ENCODE measurements at regions of chr13 and their contacts with region 1.

Region 1: DNA sequence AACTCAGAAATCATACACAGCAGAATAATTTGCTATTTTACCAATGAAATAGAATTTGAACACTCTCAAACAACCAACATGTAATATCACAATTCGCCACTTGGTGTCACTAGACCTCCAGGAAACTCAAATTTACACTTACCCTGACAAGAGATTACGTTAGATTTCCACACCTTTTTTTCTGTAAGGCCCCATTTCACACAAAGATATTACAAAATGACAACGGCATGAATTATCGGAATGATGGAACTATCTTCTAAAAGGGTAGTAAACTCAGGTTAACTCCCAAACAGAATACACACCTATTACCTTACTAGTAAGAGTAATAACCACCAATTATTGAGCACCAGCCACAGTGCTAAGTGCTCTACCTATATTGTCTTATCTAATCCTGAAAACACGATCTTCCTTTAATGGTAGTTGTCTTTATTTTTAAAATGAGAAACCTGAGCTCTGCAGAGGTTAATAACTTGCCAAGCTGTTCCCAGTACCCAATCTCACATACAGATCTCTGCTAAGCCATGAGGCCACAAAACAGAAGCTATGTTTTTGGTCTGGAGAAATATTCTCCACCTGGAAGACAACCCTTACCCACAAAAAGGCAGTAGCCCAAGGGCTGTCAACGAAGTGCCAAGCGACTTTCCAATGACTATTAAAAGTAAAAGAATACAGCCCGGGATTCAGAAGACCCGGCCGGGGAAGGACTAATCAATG is 152.4 kb downstream of the DCLK1 start:
- DNase-seq: peak; percentile 82
- H3K4me3 Mint-ChIP-seq: no peak overlapping the region
- H3K27ac Mint-ChIP-seq: peak overlapping the region; percentile 77
- H3K4me1 Mint-ChIP-seq: peaks cover 17% of the 10 kb centered on the region
- H3K27me3 Mint-ChIP-seq: no peaks in the 10 kb centered on the region
- CTCF ChIP-seq: peak; percentile 67

Region 2: GRCh38 chr13:35881360-35881759 is 97.4 kb before region 1 on chr13:
- CTCF ChIA-PET with region 1: no interaction called
- POLR2A ChIA-PET with region 1: no interaction called
- intact Hi-C with region 1: no loop called
- DNase-seq: no peak
- H3K4me3 Mint-ChIP-seq: no peak overlapping the region
- H3K27ac Mint-ChIP-seq: no peak overlapping the region
- H3K4me1 Mint-ChIP-seq: no peaks in the 10 kb centered on the region
- H3K27me3 Mint-ChIP-seq: no peaks in the 10 kb centered on the region
- CTCF ChIP-seq: no peak

Region 3: DNA sequence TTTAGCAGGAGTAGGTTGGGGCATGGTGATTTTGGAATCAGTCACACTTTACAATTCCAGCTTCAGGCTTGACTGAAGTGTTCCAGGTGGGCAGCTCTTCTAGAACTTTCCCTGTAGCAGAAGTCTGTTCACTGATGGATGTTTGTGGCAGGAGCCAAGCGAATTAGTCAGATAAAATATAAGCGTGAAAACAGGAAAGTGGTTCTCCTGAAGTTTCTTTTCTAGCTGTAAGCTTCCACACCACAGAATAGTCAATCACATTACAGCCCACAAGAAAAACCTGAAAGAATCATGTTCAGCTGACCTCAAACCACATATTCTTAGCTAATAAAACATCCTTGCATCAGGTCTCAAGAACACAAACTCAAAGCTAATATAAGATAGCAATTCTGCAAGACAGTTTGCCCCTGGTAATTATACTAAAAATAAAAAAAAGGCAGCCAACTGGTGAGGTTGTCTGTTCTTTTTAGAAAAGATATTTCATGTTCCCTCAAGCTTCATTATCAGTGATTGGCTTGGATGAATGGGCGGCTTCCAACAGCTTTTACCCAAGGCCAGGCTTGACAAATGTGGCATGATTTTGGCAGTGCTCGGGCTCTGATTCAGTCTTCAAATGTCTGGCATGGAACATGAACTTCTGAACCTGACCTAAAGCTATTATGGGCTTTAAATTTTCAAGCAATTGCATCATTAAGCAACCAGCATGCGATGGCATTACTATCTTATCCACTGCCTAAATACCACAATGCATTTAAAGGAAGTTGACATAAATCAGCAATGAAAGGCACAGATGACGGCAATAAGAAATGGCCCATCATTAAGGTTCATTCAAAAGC is 15.6 kb after region 1 on chr13:
- CTCF ChIA-PET with region 1: interaction called, 23 read pairs
- POLR2A ChIA-PET with region 1: interaction called, 22 read pairs
- intact Hi-C with region 1: loop called (anchors 1 kb)
- DNase-seq: peak; percentile 96
- H3K4me3 Mint-ChIP-seq: no peak overlapping the region
- H3K27ac Mint-ChIP-seq: peak overlapping the region; percentile 82
- H3K4me1 Mint-ChIP-seq: peaks cover 31% of the 10 kb centered on the region
- H3K27me3 Mint-ChIP-seq: no peaks in the 10 kb centered on the region
- CTCF ChIP-seq: no peak

Region 4: GRCh38 chr13:36088014-36088413 is 109.3 kb after region 1 on chr13:
- CTCF ChIA-PET with region 1: interaction called, 3 read pairs
- POLR2A ChIA-PET with region 1: no interaction called
- intact Hi-C with region 1: loop called (anchors 2 kb)
- DNase-seq: peak; percentile 21
- H3K4me3 Mint-ChIP-seq: no peak overlapping the region
- H3K27ac Mint-ChIP-seq: no peak overlapping the region
- H3K4me1 Mint-ChIP-seq: peaks cover 6% of the 10 kb centered on the region
- H3K27me3 Mint-ChIP-seq: no peaks in the 10 kb centered on the region
- CTCF ChIP-seq: no peak

Region 5: DNA sequence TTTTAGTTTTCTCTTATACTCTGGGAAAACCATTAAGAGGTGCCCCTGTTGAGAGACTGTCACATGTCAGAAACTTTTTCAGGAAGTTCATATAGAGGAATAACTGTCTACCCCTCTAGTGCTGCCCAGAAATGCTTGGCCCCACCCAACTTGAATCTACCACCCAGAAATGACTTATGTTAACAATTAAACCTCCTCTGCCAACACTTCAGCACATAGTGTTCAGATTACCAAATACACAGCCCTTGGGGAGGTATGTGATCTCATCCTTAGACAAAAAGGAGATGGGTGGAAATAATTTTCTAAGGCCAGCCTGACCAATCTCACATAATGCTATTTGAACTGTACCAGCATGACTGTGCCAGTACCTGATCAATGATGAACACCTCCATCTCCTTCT is 283.2 kb after region 1 on chr13:
- CTCF ChIA-PET with region 1: interaction called, 15 read pairs
- POLR2A ChIA-PET with region 1: interaction called, 3 read pairs
- intact Hi-C with region 1: no loop called
- DNase-seq: peak; percentile 3
- H3K4me3 Mint-ChIP-seq: no peak overlapping the region
- H3K27ac Mint-ChIP-seq: peak overlapping the region; percentile 61
- H3K4me1 Mint-ChIP-seq: peaks cover 11% of the 10 kb centered on the region
- H3K27me3 Mint-ChIP-seq: no peaks in the 10 kb centered on the region
- CTCF ChIP-seq: no peak

Region 6: GRCh38 chr13:36282818-36283445 is 304.2 kb after region 1 on chr13:
- CTCF ChIA-PET with region 1: interaction called, 278 read pairs
- POLR2A ChIA-PET with region 1: interaction called, 7 read pairs
- intact Hi-C with region 1: no loop called
- DNase-seq: peak; percentile 58
- H3K4me3 Mint-ChIP-seq: no peak overlapping the region
- H3K27ac Mint-ChIP-seq: no peak overlapping the region
- H3K4me1 Mint-ChIP-seq: no peaks in the 10 kb centered on the region
- H3K27me3 Mint-ChIP-seq: no peaks in the 10 kb centered on the region
- CTCF ChIP-seq: peak; percentile 67

Region 7: DNA sequence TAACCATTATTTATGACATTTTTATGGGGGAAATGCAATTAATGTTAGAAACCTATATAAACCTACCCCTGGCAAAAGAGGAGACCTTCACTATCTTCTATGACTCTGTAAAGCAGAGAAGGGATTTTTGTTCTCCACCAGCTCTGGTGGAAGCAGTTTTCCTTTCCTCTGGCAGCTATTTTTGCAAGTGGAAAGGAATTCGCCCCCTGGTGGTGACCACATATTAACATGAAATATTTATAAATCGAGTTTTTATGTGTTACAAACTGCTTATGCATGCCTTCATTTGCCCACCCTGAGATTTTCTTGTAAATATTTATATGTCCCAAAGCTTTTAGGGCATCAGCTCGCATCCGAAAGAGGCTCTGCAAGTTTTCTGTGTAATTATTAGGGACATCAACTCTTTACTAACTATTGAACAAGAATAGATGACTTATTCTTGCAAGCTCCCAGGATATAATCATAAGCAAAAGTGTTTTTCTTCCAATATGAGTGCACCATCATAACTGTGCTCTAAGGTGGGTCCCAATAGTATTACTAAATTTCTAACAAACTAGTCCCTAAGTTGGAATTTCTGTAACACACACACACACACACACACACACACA is 757.5 kb after region 1 on chr13:
- CTCF ChIA-PET with region 1: interaction called, 9 read pairs
- POLR2A ChIA-PET with region 1: no interaction called
- intact Hi-C with region 1: loop called (anchors 5 kb)
- DNase-seq: peak; percentile 62
- H3K4me3 Mint-ChIP-seq: no peak overlapping the region
- H3K27ac Mint-ChIP-seq: no peak overlapping the region
- H3K4me1 Mint-ChIP-seq: no peaks in the 10 kb centered on the region
- H3K27me3 Mint-ChIP-seq: no peaks in the 10 kb centered on the region
- CTCF ChIP-seq: peak; percentile 69

Measured in MCF 10A (cell line).